Prostate gland (tissue), 2 donors: ENCODE measurements at regions of chr15 and their contacts with region 1.

Region 1: GRCh38 chr15:90320061-90320884 is 31.8 kb upstream of the ZNF774 start:
- DNase-seq: peak; percentile 76
- H3K4me3 ChIP-seq: no peak overlapping the region
- H3K27ac ChIP-seq: peak overlapping the region; percentile 55 to 68
- H3K4me1 ChIP-seq: no peaks in the 10 kb centered on the region
- H3K27me3 ChIP-seq: no peaks in the 10 kb centered on the region
- CTCF ChIP-seq: peak; percentile 91 to 99 (median 98)
- POLR2A ChIP-seq: no peak

Region 2: DNA sequence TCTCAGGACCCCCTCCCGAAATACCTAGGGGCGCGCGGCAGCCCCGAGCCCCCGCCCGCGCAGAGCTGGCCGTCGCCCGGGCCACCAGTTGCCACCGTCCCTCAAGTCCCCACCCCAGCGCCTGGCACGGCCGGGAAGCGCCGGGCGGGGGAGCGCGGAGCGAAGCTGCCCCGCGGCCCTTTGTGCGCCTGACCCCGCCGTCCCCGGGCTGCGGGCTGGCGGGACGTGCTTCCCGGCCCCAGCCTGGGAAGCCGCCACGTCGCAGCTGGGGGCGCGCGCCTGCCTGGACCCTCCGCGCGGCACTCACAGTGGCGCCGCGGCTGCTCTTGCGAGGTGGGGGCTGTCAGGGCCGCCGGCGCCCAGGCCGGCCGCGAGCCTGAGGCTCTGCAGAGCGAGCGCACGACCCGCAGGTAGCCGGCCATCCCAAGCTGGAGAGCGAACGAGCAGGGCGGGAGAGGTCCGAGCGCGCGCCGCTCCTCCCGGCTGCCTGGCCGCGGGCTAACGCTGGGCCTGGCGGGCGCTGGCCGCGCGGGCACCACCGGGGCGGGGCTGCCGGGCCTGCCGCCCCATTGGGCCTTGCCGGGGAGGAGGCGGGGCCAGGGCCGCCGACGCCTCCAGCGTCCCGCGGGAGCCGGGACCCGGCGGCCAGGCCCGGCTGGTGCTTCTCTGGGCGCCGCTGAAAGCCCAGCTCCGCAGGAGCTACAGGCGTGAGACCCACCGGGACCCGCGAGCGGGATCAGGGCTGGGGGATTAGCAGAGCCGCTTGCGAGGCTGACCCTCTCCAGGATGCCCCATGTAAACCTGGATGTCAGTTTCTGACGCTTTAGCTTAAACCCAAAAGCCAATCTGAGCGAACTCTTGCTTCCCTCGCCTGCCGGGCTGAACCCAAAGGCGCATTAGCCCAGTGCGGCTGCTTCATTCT is 218.0 kb before region 1 on chr15 and contains the start of gene IDH2:
- intact Hi-C with region 1: no loop called
- DNase-seq: peak; percentile 82
- H3K4me3 ChIP-seq: peak within 1 kb of the TSS; percentile 96 to 99
- H3K27ac ChIP-seq: peak within 1 kb of the TSS; percentile 92 to 99
- H3K4me1 ChIP-seq: peaks cover 27% of the 10 kb centered on the region
- H3K27me3 ChIP-seq: no peaks in the 10 kb centered on the region
- CTCF ChIP-seq: peak in 2 of 4 experiments; percentile 14 to 36
- POLR2A ChIP-seq: peak; percentile 96
- total RNA-seq, gene IDH2: 98.1 to 190 TPM

Region 3: GRCh38 chr15:90436952-90437351 is 116.7 kb after region 1 on chr15:
- intact Hi-C with region 1: no loop called
- DNase-seq: no peak
- H3K4me3 ChIP-seq: no peak overlapping the region
- H3K27ac ChIP-seq: no peak overlapping the region
- H3K4me1 ChIP-seq: no peaks in the 10 kb centered on the region
- H3K27me3 ChIP-seq: no peaks in the 10 kb centered on the region
- CTCF ChIP-seq: no peak
- POLR2A ChIP-seq: no peak

Region 4: DNA sequence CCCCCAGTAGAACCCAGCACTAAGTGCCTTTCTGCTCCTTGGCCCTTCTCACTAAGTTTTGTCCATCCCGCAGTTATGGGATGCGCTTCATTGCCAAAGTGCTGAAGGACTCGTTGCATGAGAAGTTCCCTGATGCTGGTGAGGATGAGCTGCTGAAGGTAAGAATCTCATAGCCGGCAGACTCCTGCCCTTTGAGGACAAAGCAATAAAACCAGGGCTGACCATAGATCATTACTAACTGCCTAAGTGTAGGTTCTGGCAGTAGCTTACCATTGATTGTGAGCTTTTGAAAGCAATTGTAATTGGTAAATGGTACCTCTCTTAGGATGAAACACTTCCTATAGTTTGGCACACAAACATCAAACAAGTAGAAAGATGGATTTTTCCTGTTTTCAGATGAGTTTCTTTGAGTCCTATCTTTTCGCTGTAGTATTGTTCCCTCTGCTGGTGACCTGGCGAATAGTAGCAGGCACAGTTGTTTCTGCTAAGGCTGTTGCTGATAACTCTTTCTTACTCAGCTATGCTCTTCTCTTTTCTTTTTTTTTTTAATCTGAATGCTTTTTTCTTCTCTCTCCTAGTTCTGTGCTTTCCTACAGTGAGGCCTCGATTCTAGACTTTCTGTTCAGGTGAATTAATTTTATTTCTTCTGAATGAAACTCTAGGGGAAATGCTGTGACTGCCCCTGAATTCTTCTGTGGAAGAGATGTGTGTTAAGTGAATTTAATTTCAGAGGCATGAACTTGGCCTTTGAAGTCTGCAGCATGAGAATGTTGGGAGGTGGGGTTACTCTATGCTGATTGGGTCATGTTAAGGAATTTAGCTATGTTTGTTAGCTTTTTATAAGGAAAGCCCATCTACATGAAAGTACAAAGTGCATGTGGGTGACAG is 162.1 kb after region 1 on chr15:
- intact Hi-C with region 1: loop called (anchors 1 kb)
- DNase-seq: peak; percentile 27
- H3K4me3 ChIP-seq: no peak overlapping the region
- H3K27ac ChIP-seq: no peak overlapping the region
- H3K4me1 ChIP-seq: peaks cover 6% of the 10 kb centered on the region
- H3K27me3 ChIP-seq: no peaks in the 10 kb centered on the region
- CTCF ChIP-seq: peak; percentile 35 to 87 (median 68)
- POLR2A ChIP-seq: no peak

Region 5: DNA sequence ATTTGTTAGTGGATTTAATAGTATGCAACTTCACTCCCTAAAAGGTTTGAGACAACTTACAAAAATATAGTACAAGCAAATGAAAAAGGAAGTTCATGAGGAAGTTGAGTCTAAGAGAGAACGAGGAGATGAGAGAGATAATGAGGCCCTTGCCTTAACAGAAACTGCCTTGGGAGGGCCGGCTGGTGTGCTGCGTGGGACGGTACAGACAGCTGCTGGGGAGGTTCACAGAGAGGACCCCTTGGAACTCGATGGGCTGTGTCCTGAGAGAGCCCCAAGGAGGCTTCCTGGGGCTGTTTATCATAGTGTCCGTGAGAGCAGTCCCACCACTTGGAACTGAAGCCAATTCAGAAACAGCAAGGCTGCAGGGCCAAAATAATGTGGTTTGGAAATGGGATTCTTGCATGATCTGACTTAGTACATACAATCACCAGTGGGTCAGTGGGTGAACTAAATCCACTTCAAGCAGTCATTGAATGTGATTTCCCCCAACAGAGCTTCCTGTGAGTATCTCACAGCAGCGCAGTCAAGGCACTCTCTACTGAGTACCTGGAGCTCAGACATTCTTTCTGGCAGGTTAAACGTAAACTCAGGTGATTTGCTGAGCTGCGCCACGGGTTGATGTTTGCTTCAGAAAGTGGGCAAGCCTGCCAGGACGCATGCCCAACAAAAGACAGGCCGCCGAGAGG is 300.2 kb after region 1 on chr15:
- intact Hi-C with region 1: loop called (anchors 10 kb)
- DNase-seq: no peak
- H3K4me3 ChIP-seq: no peak overlapping the region
- H3K27ac ChIP-seq: no peak overlapping the region
- H3K4me1 ChIP-seq: no peaks in the 10 kb centered on the region
- H3K27me3 ChIP-seq: no peaks in the 10 kb centered on the region
- CTCF ChIP-seq: no peak
- POLR2A ChIP-seq: no peak

Region 6: DNA sequence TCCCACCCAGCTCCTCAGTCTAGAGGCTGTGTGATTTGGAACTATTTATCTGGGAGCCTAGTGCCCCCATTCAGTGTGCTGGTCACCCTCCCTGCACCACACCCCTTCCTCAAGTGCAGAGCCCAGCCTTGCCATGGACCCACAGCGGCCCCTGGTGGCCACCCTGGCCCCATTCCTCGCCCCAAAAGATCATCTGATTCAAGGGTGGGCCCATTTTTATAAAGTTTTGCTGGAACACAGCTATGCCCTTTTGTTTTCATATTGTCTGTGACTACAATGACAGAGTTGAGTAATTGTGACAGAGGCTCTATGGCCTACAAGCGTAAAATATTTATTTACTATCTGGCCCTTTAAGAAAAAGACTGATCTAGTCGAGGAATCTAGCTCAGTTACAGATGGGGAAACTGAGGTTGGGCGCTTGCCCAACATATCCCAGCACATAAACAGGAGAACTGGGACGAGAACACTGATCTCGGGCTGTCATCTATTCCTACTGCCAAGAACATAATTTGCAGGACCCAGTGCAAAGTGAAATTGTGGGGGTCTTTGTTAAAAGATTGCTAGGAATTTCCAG is 565.9 kb after region 1 on chr15:
- intact Hi-C with region 1: loop called (anchors 10 kb)
- DNase-seq: peak; percentile 59
- H3K4me3 ChIP-seq: no peak overlapping the region
- H3K27ac ChIP-seq: peak overlapping the region; percentile 78 to 86
- H3K4me1 ChIP-seq: peaks cover 6% of the 10 kb centered on the region
- H3K27me3 ChIP-seq: no peaks in the 10 kb centered on the region
- CTCF ChIP-seq: peak; percentile 93 to 97 (median 96)
- POLR2A ChIP-seq: no peak